SK-N-SH (cell line): ENCODE measurements at regions of chr6 and their contacts with region 1.

Region 1: DNA sequence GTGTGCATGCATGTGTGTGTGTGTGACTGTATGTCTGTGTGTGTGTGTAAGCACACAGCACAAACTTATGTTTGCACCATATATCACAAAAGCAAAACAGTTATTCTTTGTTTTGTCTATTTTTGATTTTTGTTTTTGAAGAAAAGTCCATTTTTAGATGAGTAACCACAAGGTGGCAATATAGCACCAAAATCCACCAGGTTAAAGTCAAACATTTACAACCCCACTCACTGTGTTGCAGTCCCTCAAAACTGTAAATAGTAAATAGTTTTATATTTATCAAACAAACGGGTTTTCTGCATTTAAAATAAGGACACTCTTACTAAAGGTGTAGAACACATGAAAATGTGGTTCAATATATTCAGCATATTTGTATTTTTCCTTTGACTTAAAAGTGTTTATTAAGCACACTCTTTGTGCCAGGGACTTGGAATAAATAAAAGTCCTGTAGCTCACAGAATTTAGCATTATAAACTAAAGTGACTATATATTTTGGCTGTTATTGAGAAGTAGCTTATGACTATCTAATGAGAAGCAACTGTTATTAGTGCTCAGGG is 118.5 kb downstream of the GFRAL start:
- DNase-seq: peak; percentile 16
- H3K4me3 ChIP-seq: no peak overlapping the region
- H3K27ac ChIP-seq: no peak overlapping the region
- H3K4me1 ChIP-seq: no peaks in the 10 kb centered on the region
- H3K27me3 ChIP-seq: peaks cover 6% of the 10 kb centered on the region
- CTCF ChIP-seq: peak; percentile 78
- EP300 ChIP-seq: no peak
- RAD21 ChIP-seq: peak; percentile 83

Region 2: GRCh38 chr6:55276745-55277530 is 168.8 kb before region 1 on chr6:
- CTCF ChIA-PET with region 1: interaction called, 20 read pairs
- POLR2A ChIA-PET with region 1: no interaction called
- DNase-seq: peak; percentile 19
- H3K4me3 ChIP-seq: no peak overlapping the region; a peak in 1 of 4 replicates
- H3K27ac ChIP-seq: peak overlapping the region in 1 of 2 experiments; percentile 22; a peak in 1 of 4 replicates
- H3K4me1 ChIP-seq: peaks cover 0 to 4% of the 10 kb centered on the region in 2 experiments; a peak in 1 of 4 replicates
- H3K27me3 ChIP-seq: no peaks in the 10 kb centered on the region; the same call in 1 of the 2 replicates
- CTCF ChIP-seq: peak; percentile 72
- EP300 ChIP-seq: no peak
- RAD21 ChIP-seq: peak; percentile 82

Region 3: DNA sequence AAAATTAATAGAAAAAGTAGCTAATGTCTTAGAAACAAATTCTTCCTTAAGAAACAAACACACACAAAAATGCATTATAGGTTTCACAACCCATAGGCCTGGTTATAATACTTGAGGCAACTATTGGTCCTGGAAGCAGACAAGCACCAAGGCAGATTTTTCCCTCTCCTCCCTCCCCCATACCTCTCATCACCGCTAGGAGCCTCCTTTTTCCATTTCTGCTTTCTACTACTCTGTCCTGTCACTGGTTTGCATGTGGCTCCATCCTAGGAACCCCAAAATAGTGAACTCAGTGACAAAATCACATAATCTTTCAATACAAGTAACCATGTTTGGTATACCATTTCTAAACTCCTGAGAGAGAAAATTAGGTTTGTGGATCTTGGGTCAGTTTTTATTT is 67.2 kb after region 1 on chr6:
- CTCF ChIA-PET with region 1: no interaction called
- POLR2A ChIA-PET with region 1: no interaction called
- DNase-seq: no peak
- H3K4me3 ChIP-seq: no peak overlapping the region
- H3K27ac ChIP-seq: no peak overlapping the region
- H3K4me1 ChIP-seq: no peaks in the 10 kb centered on the region
- H3K27me3 ChIP-seq: no peaks in the 10 kb centered on the region
- CTCF ChIP-seq: no peak; the same call in 1 of the 2 replicates
- EP300 ChIP-seq: no peak
- RAD21 ChIP-seq: no peak

Region 4: DNA sequence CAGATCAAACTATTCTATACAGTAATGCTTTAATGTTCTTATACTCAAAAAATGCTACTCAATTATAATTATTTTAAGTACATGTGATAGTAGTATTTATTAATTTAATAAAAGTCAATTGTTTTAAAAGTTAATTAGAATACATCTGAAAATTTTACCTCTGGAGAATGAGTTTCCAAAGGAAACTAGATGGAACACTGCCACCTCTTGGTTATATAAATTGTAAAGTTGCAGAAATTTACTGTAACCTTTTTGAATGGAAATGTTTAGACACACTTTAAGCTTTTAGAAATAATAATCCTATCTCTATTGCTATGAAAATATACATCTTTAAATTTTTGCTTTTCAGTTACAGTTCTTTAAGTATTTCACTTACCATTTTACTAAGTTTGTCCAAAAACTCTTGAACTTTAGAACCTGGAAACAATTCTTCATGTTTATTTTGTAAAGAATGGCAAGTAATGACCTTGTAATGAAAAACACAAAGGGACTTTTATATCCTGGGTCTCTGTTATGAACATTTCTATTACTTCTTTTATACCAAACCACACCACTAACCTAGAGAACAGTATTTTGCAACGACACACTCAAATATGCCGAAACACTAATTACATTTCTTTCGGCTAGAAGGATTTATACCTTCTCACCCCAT is 440.6 kb after region 1 on chr6:
- CTCF ChIA-PET with region 1: interaction called, 64 read pairs
- POLR2A ChIA-PET with region 1: no interaction called
- DNase-seq: no peak
- H3K4me3 ChIP-seq: no peak overlapping the region
- H3K27ac ChIP-seq: no peak overlapping the region
- H3K4me1 ChIP-seq: no peaks in the 10 kb centered on the region; a peak in 1 of 4 replicates
- H3K27me3 ChIP-seq: no peaks in the 10 kb centered on the region
- CTCF ChIP-seq: peak; percentile 63
- EP300 ChIP-seq: no peak
- RAD21 ChIP-seq: peak; percentile 67